K562 (cell line): ENCODE measurements at regions of chr10 and their contacts with region 1.

Region 1: DNA sequence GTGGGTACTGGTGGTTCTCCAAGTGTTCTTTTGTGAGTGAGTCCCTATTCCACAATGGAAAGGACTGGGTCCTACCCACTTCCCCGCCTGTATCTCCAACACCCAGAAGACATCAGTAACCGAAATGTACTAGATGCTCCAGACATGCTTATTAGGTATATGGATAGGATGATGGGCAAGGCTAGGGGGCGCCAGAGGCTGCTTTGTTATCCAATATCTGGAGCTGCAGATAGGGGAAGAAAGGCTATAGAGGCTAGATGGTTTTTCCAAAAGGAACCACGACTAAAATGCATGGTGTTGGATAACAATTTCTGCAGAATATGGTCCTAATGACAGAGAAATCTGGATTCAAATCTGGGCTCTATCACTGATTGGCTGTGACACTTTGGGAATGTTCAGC is 56.2 kb upstream of the TM9SF3 start:
- DNase-seq: peak; percentile 31 to 78 (median 46)
- ATAC-seq: peak; percentile 93
- H3K4me3 ChIP-seq: no peak overlapping the region
- H3K27ac ChIP-seq: no peak overlapping the region
- H3K4me1 ChIP-seq: peaks cover 0 to 3% of the 10 kb centered on the region in 2 experiments; a peak in 2 of 5 replicates
- H3K27me3 ChIP-seq: no peaks in the 10 kb centered on the region; a peak in 1 of 5 replicates
- CTCF ChIP-seq: peak; percentile 69 to 86 (median 85)
- EP300 ChIP-seq: no peak
- POLR2A ChIP-seq: no peak
- RAD21 ChIP-seq: peak; percentile 81 to 84

Region 2: GRCh38 chr10:96395931-96396877 is 246.8 kb before region 1 on chr10:
- CTCF ChIA-PET with region 1: no interaction called
- POLR2A ChIA-PET with region 1: no interaction called
- in situ Hi-C with region 1: no loop called
- intact Hi-C with region 1: loop called (anchors 10 kb)
- DNase-seq: peak; percentile 70 to 76 (median 74)
- ATAC-seq: peak; percentile 95
- H3K4me3 ChIP-seq: no peak overlapping the region
- H3K27ac ChIP-seq: no peak overlapping the region
- H3K4me1 ChIP-seq: no peaks in the 10 kb centered on the region
- H3K27me3 ChIP-seq: peaks cover 10 to 28% of the 10 kb centered on the region in 2 experiments; a peak in 3 of 5 replicates
- CTCF ChIP-seq: peak; percentile 69 to 82 (median 80)
- EP300 ChIP-seq: no peak
- POLR2A ChIP-seq: no peak
- RAD21 ChIP-seq: peak; percentile 54 to 70

Region 3: GRCh38 chr10:96743988-96744585 is 101.1 kb after region 1 on chr10:
- CTCF ChIA-PET with region 1: interaction called, 4 read pairs
- POLR2A ChIA-PET with region 1: no interaction called
- in situ Hi-C with region 1: loop called (anchors 5 kb)
- intact Hi-C with region 1: loop called (anchors 2 kb)
- DNase-seq: peak in 1 of 4 experiments; percentile 27
- ATAC-seq: peak; percentile 75
- H3K4me3 ChIP-seq: no peak overlapping the region
- H3K27ac ChIP-seq: no peak overlapping the region
- H3K4me1 ChIP-seq: peaks cover 3 to 5% of the 10 kb centered on the region in 2 experiments; a peak in 2 of 5 replicates
- H3K27me3 ChIP-seq: no peaks in the 10 kb centered on the region
- CTCF ChIP-seq: peak; percentile 33 to 56 (median 48); a peak in 5 of 6 replicates
- EP300 ChIP-seq: no peak
- POLR2A ChIP-seq: no peak
- RAD21 ChIP-seq: peak; percentile 58 to 73

Region 4: GRCh38 chr10:96831867-96832720 is 189.1 kb after region 1 on chr10 and contains the start of gene LCOR:
- CTCF ChIA-PET with region 1: no interaction called
- POLR2A ChIA-PET with region 1: interaction called, 3 read pairs
- in situ Hi-C with region 1: loop called (anchors 5 kb)
- intact Hi-C with region 1: loop called (anchors 1 kb)
- DNase-seq: peak; percentile 85 to 93 (median 89)
- ATAC-seq: peak; percentile 79
- H3K4me3 ChIP-seq: peak within 1 kb of the TSS; percentile 79
- H3K27ac ChIP-seq: peak within 1 kb of the TSS; percentile 97
- H3K4me1 ChIP-seq: peaks cover 13 to 31% of the 10 kb centered on the region in 2 experiments; a peak in 4 of 5 replicates
- H3K27me3 ChIP-seq: no peaks in the 10 kb centered on the region
- CTCF ChIP-seq: no peak; a peak in 1 of 6 replicates
- EP300 ChIP-seq: peak; percentile 81
- POLR2A ChIP-seq: peak; percentile 71
- RAD21 ChIP-seq: no peak
- polyA plus RNA-seq, gene LCOR: 3.6 to 7.2 TPM

Region 5: GRCh38 chr10:97037365-97038361 is 394.7 kb after region 1 on chr10:
- CTCF ChIA-PET with region 1: interaction called, 3 read pairs
- POLR2A ChIA-PET with region 1: interaction called, 5 read pairs
- in situ Hi-C with region 1: loop called (anchors 10 kb)
- intact Hi-C with region 1: no loop called
- DNase-seq: peak; percentile 73 to 79 (median 78)
- ATAC-seq: peak; percentile 97
- H3K4me3 ChIP-seq: no peak overlapping the region
- H3K27ac ChIP-seq: no peak overlapping the region
- H3K4me1 ChIP-seq: peaks cover 0 to 14% of the 10 kb centered on the region in 2 experiments; a peak in 3 of 5 replicates
- H3K27me3 ChIP-seq: peaks cover 8 to 30% of the 10 kb centered on the region in 2 experiments; a peak in 2 of 5 replicates
- CTCF ChIP-seq: peak; percentile 74 to 83 (median 81)
- EP300 ChIP-seq: no peak
- POLR2A ChIP-seq: no peak
- RAD21 ChIP-seq: peak; percentile 39 to 73